IMR-90 (cell line): ENCODE measurements at regions of chr1 and their contacts with region 1.

Region 1: DNA sequence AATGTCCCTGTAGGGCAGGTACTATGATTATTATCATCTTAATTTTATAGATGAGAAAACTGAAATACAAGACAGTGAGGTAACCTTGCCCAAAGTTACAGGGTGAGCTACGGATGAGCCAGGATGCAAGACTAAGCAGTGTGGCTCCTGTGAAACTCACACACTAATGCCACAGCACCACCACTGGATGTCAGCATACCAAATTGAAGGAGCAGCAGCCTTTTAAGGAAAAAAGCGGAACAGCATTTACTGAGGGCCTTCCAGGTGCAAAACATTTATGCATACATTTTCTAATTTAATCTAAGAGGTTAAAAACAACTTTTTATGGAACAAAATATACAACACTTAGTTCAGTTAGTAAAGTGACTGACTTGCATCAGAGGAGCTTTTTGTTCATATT is 41.7 kb downstream of the SEC16B start:
- DNase-seq: peak; percentile 61
- ATAC-seq: peak; percentile 18
- H3K4me3 ChIP-seq: no peak overlapping the region
- H3K27ac ChIP-seq: peak overlapping the region; percentile 77
- H3K4me1 ChIP-seq: peaks cover 20% of the 10 kb centered on the region
- H3K27me3 ChIP-seq: no peaks in the 10 kb centered on the region
- CTCF ChIP-seq: peak; percentile 34
- POLR2A ChIP-seq: no peak
- RAD21 ChIP-seq: no peak

Region 2: GRCh38 chr1:177209357-177209756 is 718.8 kb before region 1 on chr1:
- CTCF ChIA-PET with region 1: no interaction called
- POLR2A ChIA-PET with region 1: no interaction called
- dilution Hi-C with region 1: no loop called
- in situ Hi-C with region 1: no loop called
- intact Hi-C with region 1: loop called (anchors 5 kb)
- DNase-seq: peak; percentile 100
- ATAC-seq: peak; percentile 97
- H3K4me3 ChIP-seq: no peak overlapping the region
- H3K27ac ChIP-seq: no peak overlapping the region
- H3K4me1 ChIP-seq: peaks cover 6% of the 10 kb centered on the region
- H3K27me3 ChIP-seq: no peaks in the 10 kb centered on the region
- CTCF ChIP-seq: no peak
- POLR2A ChIP-seq: no peak
- RAD21 ChIP-seq: no peak

Region 3: GRCh38 chr1:177873238-177873637 is 55.0 kb before region 1 on chr1:
- CTCF ChIA-PET with region 1: no interaction called
- POLR2A ChIA-PET with region 1: no interaction called
- dilution Hi-C with region 1: no loop called
- in situ Hi-C with region 1: no loop called
- intact Hi-C with region 1: loop called (anchors 5 kb)
- DNase-seq: peak; percentile 94
- ATAC-seq: peak; percentile 91
- H3K4me3 ChIP-seq: no peak overlapping the region
- H3K27ac ChIP-seq: peak overlapping the region; percentile 22; the same call in 1 of the 2 replicates
- H3K4me1 ChIP-seq: peaks cover 5% of the 10 kb centered on the region
- H3K27me3 ChIP-seq: no peaks in the 10 kb centered on the region
- CTCF ChIP-seq: no peak
- POLR2A ChIP-seq: no peak
- RAD21 ChIP-seq: no peak

Region 4: GRCh38 chr1:177913762-177914540 is 14.2 kb before region 1 on chr1:
- CTCF ChIA-PET with region 1: interaction called, 11 read pairs
- POLR2A ChIA-PET with region 1: no interaction called
- dilution Hi-C with region 1: no loop called
- in situ Hi-C with region 1: no loop called
- intact Hi-C with region 1: no loop called
- DNase-seq: peak; percentile 63
- ATAC-seq: peak; percentile 92
- H3K4me3 ChIP-seq: no peak overlapping the region
- H3K27ac ChIP-seq: no peak overlapping the region
- H3K4me1 ChIP-seq: peaks cover 5% of the 10 kb centered on the region; the same call in 1 of the 2 replicates
- H3K27me3 ChIP-seq: no peaks in the 10 kb centered on the region; the same call in 1 of the 2 replicates
- CTCF ChIP-seq: peak; percentile 67
- POLR2A ChIP-seq: no peak
- RAD21 ChIP-seq: peak; percentile 77

Region 5: GRCh38 chr1:177996957-177997356 is 68.8 kb after region 1 on chr1:
- CTCF ChIA-PET with region 1: no interaction called
- POLR2A ChIA-PET with region 1: no interaction called
- dilution Hi-C with region 1: no loop called
- in situ Hi-C with region 1: no loop called
- intact Hi-C with region 1: no loop called
- DNase-seq: no peak
- ATAC-seq: no peak
- H3K4me3 ChIP-seq: no peak overlapping the region
- H3K27ac ChIP-seq: no peak overlapping the region
- H3K4me1 ChIP-seq: no peaks in the 10 kb centered on the region
- H3K27me3 ChIP-seq: peaks cover 3% of the 10 kb centered on the region
- CTCF ChIP-seq: no peak
- POLR2A ChIP-seq: no peak
- RAD21 ChIP-seq: no peak